HEK293T (cell line): ENCODE measurements at regions of chr1 and their contacts with region 1.

Region 1: DNA sequence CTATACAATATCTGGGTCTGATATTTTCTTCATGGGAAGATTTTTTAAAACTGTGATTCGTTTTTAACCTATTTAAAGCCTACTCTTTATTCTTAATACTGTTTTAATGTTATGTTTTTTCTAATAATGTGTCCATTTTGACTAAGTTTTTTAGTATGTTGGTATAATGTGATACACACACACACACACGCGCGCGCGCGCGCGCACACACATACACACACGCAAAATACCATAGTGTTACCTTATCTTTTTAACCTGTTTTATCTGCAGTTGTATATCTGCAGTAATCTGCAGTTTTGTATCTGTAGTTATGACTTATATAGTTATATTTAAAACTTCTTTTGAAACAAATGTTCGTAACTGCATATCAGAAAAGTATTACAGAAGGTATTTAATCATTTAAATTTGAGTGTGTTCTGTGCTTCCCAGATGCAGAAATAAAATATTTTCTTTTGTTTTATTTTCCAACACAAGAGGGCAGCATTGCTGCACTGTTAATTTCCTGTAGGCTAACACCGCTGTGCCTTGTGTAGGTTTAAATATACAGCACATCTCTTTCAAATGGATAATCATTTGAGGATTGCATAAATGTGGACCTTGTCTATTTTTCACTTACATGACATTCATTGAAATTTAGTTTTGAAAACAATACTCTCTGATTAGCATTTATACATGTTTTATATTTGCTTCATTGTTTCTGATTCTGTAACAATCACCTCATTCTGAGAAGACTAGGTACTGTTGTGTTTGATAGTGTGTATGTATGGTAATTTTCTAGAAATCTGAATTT is 166.1 kb downstream of the PDE4B start:
- DNase-seq: peak; percentile 63

Region 2: DNA sequence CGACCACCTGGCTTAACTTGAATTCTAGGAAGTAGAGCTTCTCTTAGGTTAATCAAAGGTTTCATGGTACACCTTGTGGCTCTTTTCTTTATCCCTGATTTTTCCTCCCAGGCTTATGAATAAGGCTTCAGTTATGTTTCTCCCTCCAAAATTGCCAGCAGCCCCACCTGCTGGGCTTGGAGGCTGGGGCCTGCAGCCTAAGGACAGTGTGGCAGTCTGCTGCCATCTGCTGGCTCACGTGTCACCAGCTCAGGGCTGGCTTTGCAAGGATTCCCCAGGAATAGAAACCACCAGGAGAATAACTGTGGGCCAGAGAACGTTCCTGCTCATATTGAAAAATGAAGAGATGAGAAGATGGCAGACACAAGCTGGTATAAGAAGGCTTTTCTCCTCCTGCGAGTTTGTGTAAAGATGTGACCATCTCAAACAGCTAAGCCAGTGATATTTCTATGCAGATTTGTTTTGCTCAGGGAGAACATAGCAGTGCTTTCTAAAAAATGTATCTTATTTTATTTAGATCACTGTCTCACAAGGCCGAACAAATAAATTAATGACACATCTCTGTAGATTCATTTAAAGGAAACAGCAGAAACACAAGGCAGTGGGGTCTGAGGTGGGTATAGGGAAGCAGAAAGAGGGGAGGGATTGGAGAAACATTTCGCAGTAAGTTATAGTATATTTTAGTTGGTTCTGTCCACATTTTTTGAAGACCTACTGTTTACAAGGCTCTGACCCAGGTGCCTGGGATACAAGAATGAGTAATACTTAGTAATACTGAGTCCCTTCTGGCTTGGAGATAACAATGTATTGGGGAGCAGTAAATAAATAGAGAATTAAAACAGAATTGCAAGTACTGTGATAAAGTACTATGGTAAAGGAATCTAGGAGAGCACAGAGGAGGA is 284.1 kb after region 1 on chr1:
- CTCF ChIA-PET with region 1: interaction called, 47 read pairs
- POLR2A ChIA-PET with region 1: no interaction called
- DNase-seq: peak; percentile 90